B cell (primary cell): ENCODE measurements at regions of chr16 and their contacts with region 1.

Region 1: DNA sequence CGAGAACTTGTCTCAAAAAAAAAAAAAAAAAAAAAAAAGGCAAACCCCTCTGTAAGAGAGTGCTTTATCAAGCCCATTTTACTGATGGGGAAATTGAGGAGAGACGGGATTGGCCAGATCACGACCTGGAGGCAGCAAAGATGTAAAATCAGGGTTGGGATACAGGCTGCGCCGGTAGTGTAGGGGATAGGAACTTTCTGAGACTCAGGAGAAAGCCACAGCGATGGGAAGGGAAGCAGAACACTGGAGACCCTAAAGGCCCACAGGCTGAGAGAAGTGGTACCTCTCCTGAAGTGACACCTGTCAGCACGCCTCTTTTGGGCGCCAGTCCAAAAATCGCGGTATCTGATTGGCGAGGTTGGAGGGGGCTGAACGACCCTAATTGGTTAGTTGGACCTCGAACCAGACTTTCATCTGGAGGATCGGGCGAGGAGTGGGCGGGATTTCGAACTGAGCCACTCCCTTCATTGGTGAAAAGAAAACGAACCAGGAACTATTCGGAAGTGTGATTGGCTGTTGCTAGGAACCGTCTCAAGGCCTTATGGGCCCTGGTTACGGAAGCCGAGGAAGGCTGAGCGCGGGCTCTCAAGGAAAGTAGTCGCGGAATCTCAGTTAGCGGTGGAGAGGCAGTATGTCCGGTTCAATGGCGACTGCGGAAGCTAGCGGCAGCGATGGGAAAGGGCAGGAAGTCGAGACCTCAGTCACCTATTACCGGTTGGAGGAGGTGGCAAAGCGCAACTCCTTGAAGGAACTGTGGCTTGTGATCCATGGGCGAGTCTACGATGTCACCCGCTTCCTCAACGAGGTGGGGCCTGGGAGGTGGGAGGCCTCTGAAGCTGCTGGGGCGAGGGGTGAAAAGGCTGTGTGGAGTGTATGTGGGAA is at the start of gene CYB5B:
- DNase-seq: peak; percentile 97
- ATAC-seq: peak; percentile 95
- H3K4me3 ChIP-seq: peak within 1 kb of the TSS; percentile 43 to 95 (median 89)
- H3K4me3 Mint-ChIP-seq: peak within 1 kb of the TSS; percentile 93
- H3K27ac ChIP-seq: peak within 1 kb of the TSS; percentile 52 to 88
- H3K27ac Mint-ChIP-seq: peak within 1 kb of the TSS; percentile 91
- H3K4me1 ChIP-seq: peaks cover 8 to 12% of the 10 kb centered on the region in 2 donors
- H3K4me1 Mint-ChIP-seq: peaks cover 25% of the 10 kb centered on the region
- H3K27me3 ChIP-seq: no peaks in the 10 kb centered on the region
- H3K27me3 Mint-ChIP-seq: no peaks in the 10 kb centered on the region
- CTCF ChIP-seq: no peak
- total RNA-seq, gene CYB5B: 56.7 and 64.7 TPM in 2 replicates

Region 2: DNA sequence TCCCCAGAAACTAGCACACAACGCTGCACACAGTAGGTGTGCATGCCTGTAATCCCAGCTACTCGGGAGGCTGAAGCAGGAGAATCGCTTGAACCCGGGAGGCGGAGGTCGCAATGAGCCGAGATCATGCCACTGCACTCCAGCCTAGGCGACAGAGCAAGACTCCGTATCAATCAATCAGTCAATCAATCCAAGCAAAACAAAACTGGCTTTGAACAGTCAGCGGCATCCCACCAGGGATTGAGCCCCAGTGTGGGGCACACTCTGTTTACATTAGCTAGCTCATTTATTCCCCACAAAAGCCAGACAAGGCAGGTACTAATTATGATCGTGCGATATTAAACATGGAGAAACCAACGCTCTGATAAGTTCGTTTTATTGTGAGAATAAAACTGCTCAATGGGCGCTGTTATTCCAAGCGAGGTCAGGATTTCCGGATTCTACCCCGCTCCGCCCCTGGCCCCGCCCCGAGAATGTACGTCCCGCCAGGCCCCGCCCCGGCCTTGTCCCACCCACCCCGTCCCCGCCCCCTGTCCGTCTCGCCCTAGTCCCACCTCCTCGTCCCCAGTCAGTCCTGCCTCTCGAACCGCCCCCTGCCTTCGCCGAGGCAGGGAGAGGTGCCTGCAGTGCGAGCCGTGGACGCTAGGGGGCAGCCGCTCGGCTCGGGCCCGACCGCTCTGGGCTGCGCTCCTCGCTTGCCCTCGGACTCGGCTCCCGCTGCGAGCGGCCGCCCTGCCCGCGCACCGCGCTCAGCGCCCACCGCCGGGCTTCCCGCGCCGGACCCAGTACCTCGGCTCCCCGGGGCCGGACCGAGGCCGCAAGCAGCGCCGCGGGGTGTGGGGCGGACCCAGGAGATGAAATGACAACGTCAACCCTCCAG is 113.4 kb before region 1 on chr16 and contains the start of gene VPS4A:
- CTCF ChIA-PET with region 1: no interaction called
- POLR2A ChIA-PET with region 1: no interaction called
- intact Hi-C with region 1: loop called (anchors 1 kb)
- DNase-seq: peak; percentile 97
- ATAC-seq: peak; percentile 98
- H3K4me3 ChIP-seq: peak within 1 kb of the TSS; percentile 62 to 89 (median 67)
- H3K4me3 Mint-ChIP-seq: peak within 1 kb of the TSS; percentile 99
- H3K27ac ChIP-seq: peak within 1 kb of the TSS; percentile 75 to 84
- H3K27ac Mint-ChIP-seq: peak within 1 kb of the TSS; percentile 94
- H3K4me1 ChIP-seq: peaks cover 10 to 23% of the 10 kb centered on the region in 2 donors
- H3K4me1 Mint-ChIP-seq: peaks cover 24% of the 10 kb centered on the region
- H3K27me3 ChIP-seq: no peaks in the 10 kb centered on the region
- H3K27me3 Mint-ChIP-seq: no peaks in the 10 kb centered on the region
- CTCF ChIP-seq: peak; percentile 86
- total RNA-seq, gene VPS4A: 41.4 and 43.8 TPM in 2 replicates

Region 3: DNA sequence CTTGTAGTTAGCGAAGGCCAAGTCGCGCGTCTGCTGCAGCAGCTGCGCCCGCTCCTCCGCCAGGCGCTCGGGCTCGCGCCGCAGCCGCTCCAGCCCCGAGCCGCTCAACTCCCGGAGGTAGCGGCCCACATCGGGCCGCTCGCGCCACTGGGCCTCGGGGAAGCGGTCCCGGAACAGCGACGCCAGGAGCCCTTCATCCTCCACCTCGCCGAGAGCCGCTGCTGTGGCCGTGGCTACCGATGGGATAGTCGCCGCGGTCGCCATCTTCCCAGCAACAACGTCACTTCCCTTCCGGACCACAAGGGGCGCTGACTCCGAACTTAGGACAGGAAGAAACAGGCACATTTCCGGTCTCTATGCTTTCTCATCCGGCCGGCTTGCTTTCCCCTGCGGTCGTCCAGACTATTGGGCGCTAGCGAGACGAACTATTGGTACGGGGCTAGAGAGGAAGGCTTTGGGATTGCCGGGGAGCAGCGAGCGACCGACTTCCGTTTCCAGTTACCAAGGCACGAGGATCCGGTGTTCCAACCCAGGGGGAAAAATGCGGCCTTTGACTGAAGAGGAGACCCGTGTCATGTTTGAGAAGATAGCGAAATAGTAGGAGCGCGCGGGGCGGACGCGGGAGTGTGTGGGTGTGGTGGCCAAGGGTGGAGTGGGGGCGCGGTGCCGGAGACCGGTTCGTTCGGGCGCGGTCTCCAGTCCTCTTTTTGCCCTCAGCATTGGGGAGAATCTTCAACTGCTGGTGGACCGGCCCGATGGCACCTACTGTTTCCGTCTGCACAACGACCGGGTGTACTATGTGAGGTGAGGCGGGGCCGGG is 84.8 kb before region 1 on chr16 and contains the starts of genes COG8 and NIP7:
- CTCF ChIA-PET with region 1: no interaction called
- POLR2A ChIA-PET with region 1: no interaction called
- intact Hi-C with region 1: loop called (anchors 1 kb)
- DNase-seq: peak; percentile 96
- ATAC-seq: peak; percentile 94
- H3K4me3 ChIP-seq: peak within 1 kb of the TSS; percentile 26 to 99 (median 68)
- H3K4me3 Mint-ChIP-seq: peak within 1 kb of the TSS; percentile 98
- H3K27ac ChIP-seq: peak within 1 kb of the TSS; percentile 65 to 87
- H3K27ac Mint-ChIP-seq: peak within 1 kb of the TSS; percentile 98
- H3K4me1 ChIP-seq: peaks cover 17 to 27% of the 10 kb centered on the region in 2 donors
- H3K4me1 Mint-ChIP-seq: peaks cover 45% of the 10 kb centered on the region
- H3K27me3 ChIP-seq: no peaks in the 10 kb centered on the region
- H3K27me3 Mint-ChIP-seq: no peaks in the 10 kb centered on the region
- CTCF ChIP-seq: peak; percentile 84
- total RNA-seq, gene COG8: 61.6 and 62.0 TPM in 2 replicates
- total RNA-seq, gene NIP7: 20.2 and 29.3 TPM in 2 replicates

Region 4: DNA sequence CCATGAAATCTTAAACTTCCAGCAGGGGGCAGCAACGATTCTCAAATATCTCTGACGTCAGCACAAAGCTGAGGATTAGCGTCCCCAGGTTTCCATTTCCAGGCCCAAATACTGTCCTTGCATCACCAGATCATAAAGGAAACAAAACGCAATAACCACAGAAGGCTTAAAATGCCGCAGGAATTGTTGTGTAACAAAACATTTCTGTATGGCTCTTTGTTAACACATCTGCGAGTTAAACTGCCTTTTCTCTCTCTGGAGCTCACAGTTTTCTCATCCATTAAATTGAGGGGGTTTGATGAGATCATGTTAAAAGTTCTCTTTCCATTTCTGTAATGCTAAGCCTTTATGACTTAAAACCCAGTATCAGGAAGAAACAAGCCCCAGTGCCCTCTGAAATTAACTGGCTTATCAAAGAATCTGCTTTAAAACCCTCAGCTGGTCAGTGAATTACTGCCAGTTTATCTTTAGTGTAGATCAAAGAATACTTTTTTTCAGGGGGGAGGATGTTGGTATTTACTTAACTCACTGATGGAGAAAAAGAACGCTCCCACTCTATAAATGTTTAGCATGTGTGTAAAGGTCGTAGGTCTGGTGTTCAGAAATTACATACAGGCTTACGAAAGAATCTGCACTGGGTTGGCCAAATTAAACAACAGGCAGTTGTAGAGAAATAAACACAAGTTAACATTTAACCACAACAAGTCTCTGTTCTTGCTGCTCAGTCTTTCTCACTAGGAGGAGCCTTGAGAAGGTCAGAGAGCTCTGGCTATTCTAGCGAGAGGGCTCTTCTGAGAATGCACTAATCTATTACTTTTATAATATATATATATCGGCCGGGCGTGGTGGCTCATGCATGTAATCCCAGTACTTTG is 27.9 kb before region 1 on chr16:
- CTCF ChIA-PET with region 1: interaction called, 16 read pairs
- POLR2A ChIA-PET with region 1: no interaction called
- intact Hi-C with region 1: loop called (anchors 1 kb)
- DNase-seq: peak; percentile 83
- ATAC-seq: peak; percentile 73
- H3K4me3 ChIP-seq: no peak overlapping the region
- H3K4me3 Mint-ChIP-seq: no peak overlapping the region
- H3K27ac ChIP-seq: peak overlapping the region in 1 of 2 donors; percentile 4
- H3K27ac Mint-ChIP-seq: no peak overlapping the region
- H3K4me1 ChIP-seq: no peaks in the 10 kb centered on the region
- H3K4me1 Mint-ChIP-seq: peaks cover 3% of the 10 kb centered on the region
- H3K27me3 ChIP-seq: no peaks in the 10 kb centered on the region
- H3K27me3 Mint-ChIP-seq: no peaks in the 10 kb centered on the region
- CTCF ChIP-seq: peak; percentile 82

Region 5: GRCh38 chr16:69761983-69762813 is 337.9 kb after region 1 on chr16 and contains the start of gene WWP2:
- CTCF ChIA-PET with region 1: no interaction called
- POLR2A ChIA-PET with region 1: no interaction called
- intact Hi-C with region 1: loop called (anchors 1 kb)
- DNase-seq: peak; percentile 92
- ATAC-seq: peak; percentile 82
- H3K4me3 ChIP-seq: peak within 1 kb of the TSS; percentile 87 to 95 (median 92)
- H3K4me3 Mint-ChIP-seq: peak within 1 kb of the TSS; percentile 90
- H3K27ac ChIP-seq: peak within 1 kb of the TSS; percentile 92 to 98
- H3K27ac Mint-ChIP-seq: peak within 1 kb of the TSS; percentile 97
- H3K4me1 ChIP-seq: peaks cover 14 to 23% of the 10 kb centered on the region in 2 donors
- H3K4me1 Mint-ChIP-seq: peaks cover 30% of the 10 kb centered on the region
- H3K27me3 ChIP-seq: no peaks in the 10 kb centered on the region
- H3K27me3 Mint-ChIP-seq: no peaks in the 10 kb centered on the region
- CTCF ChIP-seq: no peak
- total RNA-seq, gene WWP2: 100 and 105 TPM in 2 replicates